ENCODE measurements at regions of chr9 and their contacts with region 1.

Region 1: GRCh38 chr9:133042676-133043075 is 11.9 kb downstream of the GTF3C5 start:
- DNase-seq: no peak
- ATAC-seq: no peak
- H3K4me3 ChIP-seq: no peak overlapping the region
- H3K27ac ChIP-seq: no peak overlapping the region
- H3K4me1 ChIP-seq: no peaks in the 10 kb centered on the region
- H3K27me3 ChIP-seq: no peaks in the 10 kb centered on the region
- CTCF ChIP-seq: no peak

Region 2: DNA sequence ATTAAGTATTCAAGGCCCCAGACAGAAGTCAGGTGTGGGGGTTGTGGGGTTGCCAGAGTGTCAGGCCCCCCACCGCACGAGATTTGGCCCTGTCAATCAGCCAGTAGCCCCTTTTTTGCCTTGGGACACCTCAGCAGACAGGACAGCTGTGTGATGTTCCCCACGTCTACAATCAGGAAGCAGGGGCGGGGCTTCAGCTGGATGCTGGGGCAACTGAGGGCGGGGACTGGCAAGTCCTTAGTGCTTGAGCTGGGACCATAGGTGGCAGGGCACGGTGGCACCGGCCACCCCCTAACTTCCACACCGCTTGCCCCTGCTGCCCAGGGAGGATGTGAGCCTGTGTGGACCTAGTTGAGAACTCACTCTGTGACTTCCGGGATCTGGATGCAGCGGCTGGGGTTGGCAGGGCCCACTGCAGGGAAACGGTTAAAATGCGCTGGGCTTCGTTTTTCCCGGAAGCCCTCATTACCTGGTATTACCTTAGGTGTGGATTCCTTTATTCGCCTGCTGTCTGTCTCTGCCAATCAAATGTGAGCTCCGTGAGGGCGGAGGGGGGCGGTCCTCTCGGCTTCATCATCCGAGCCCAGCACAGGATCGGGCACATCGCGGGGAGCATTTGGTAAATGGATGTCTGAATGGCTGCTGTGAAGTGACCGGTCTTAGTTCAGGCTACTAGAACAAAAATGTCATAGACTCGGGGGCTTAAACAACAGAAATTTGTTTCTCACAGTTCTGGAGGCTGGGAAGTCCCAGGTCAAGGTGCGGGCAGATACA is 19.4 kb before region 1 on chr9:
- CTCF ChIA-PET with region 1: interaction called, 11 read pairs
- POLR2A ChIA-PET with region 1: no interaction called
- intact Hi-C with region 1: no loop called
- DNase-seq: no peak
- ATAC-seq: no peak
- H3K4me3 ChIP-seq: no peak overlapping the region
- H3K27ac ChIP-seq: no peak overlapping the region
- H3K4me1 ChIP-seq: no peaks in the 10 kb centered on the region; the same call in 1 of the 2 replicates
- H3K27me3 ChIP-seq: 0 out of 2 replicates have a peak, but pooled peaks cover under 1% of the 10 kb centered on the region
- CTCF ChIP-seq: no peak